Activated CD4-positive, alpha-beta memory T cell treated with anti-CD3 and anti-CD28 coated beads for 36 hours (primary cell): ENCODE measurements at regions of chr17 and their contacts with region 1.

Region 1: DNA sequence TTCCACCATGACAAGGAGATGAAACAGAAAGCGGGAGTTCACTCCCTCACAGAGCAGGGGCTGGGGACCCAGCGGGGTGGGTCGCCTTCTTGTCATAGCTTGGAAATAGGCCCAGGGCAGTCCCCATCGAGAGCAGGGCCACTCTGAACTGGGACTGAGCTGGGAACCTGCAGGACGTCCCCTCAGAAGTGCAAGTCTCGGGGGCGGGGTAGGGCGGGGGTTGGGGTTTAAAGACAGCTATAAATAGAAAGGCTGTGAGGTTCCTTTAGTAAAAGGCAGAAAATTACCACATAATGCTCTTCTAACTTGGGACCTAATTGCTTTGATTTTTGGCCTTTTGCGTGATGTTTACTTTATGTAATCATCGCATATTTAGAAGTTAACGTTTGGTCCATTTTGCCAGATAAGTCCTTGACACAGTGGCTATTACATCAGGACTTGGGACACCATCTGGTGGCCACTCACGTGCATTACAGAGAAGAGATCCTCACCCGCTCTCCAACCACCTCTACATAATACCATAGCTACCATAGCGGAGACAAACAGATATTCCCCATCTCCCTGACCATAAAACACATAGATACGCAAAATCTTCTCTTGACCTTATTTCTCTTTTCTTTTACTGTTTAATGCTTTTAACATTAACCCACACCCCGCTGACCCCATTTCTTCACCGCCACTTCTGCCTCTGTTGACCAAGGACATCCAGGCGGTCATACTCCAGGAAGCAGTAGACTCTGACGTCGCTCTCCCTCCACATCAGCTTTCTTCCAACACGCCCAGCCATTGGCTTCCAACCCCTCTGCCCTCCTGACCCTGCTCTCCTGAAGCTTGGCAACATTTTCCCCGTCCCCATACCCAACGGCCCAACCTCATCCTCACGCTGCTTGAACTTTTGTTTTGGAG is 27.5 kb upstream of the PIK3R6 start:
- DNase-seq: peak; percentile 68
- H3K4me3 Mint-ChIP-seq: no peak overlapping the region
- H3K27ac Mint-ChIP-seq: no peak overlapping the region
- H3K4me1 Mint-ChIP-seq: peaks cover 64% of the 10 kb centered on the region
- H3K27me3 Mint-ChIP-seq: no peaks in the 10 kb centered on the region

Region 2: GRCh38 chr17:8383143-8383822 is 511.6 kb before region 1 on chr17 and contains the start of gene RPL26:
- CTCF ChIA-PET with region 1: interaction called, 3 read pairs
- POLR2A ChIA-PET with region 1: no interaction called
- intact Hi-C with region 1: loop called (anchors 10 kb)
- DNase-seq: peak; percentile 97
- H3K4me3 Mint-ChIP-seq: peak within 1 kb of the TSS; percentile 97
- H3K27ac Mint-ChIP-seq: peak within 1 kb of the TSS; percentile 99
- H3K4me1 Mint-ChIP-seq: peaks cover 51% of the 10 kb centered on the region
- H3K27me3 Mint-ChIP-seq: no peaks in the 10 kb centered on the region
- total RNA-seq, gene RPL26: 2,959 to 2,997 TPM

Region 3: DNA sequence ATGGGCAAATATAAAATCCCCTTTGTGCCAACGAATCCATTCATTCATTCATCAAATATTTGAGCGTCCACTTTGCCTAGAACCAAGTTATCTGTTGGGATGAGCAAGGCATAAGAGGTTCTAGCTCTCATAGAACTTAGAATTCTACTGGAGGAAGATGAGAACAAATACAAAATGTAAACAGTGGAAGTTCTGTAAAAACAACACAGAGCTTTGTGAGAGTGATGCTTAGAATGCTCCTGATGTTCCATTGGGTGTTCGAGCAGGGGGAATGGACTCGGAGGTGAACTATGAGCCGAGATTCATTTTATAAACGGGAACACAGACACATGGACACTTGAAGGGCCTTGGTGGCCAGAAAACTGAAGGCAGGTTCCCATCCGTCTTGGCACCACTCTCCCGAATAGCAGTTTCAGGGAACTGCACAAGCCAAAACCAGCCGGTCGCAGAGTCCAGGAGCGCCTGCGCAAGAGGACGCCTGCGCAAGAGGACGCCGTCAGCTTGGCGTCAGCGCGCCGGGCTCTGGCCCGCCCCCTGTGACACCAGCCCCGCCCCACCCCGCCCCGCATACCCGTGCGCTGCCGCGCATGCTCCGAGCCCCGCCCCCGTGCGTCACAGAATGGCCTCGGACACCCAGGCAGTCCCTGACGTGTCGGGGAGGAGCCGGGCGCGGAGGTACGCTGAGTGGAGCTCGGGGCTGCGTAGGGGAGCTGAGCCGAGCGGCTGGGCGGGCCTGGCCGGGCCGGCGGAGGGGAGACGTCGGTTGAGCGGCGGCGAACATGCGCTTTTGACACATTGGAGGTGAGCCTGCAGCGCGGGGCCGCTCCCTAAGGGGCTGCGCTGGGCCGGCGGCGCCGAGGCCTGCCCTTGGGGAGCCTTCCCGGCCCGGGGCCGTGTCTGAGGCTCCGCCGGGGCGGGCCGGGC is 459.4 kb before region 1 on chr17 and contains the start of gene NDEL1:
- CTCF ChIA-PET with region 1: no interaction called
- POLR2A ChIA-PET with region 1: no interaction called
- intact Hi-C with region 1: loop called (anchors 5 kb)
- DNase-seq: peak; percentile 99
- H3K4me3 Mint-ChIP-seq: peak within 1 kb of the TSS; percentile 92
- H3K27ac Mint-ChIP-seq: peak within 1 kb of the TSS; percentile 91
- H3K4me1 Mint-ChIP-seq: peaks cover 31% of the 10 kb centered on the region
- H3K27me3 Mint-ChIP-seq: no peaks in the 10 kb centered on the region
- total RNA-seq, gene NDEL1: 58.0 to 62.8 TPM

Region 4: DNA sequence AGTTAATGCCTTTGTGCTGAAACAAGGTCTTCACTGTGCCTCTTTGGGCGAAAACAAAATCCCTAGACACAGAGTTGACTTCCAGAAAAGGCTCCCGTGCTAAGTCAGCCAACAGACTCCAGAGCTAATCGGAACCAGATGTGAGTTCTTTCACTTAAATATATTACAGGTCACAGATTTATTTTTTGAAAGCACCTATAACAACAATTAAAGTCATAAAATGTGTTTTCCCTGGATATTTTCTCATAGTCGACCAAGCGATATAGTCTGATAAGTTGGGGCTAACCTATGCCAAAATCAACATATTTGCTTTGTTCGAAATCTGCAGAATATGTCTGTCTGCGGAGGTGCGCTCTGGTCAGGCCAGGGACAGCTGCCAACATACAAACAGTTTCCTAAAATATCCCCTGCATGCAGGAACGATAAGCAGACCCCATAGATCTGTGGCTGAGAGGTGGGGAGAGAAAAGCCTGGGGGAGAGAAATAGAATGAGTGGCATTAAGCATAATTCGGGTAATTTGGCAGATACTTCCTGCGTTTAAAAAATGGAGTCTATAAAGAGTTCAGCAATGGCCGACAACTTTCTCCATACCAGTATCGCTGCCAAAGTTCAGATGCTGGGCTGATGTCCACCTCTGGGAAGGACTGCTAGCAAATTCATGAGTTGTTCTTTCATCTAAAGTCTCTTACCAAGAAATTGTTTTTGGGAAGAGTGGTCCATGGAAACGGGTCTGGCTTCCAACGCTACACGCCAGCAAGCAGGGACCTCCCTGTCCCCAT is 213.6 kb before region 1 on chr17:
- CTCF ChIA-PET with region 1: no interaction called
- POLR2A ChIA-PET with region 1: no interaction called
- intact Hi-C with region 1: no loop called
- DNase-seq: no peak
- H3K4me3 Mint-ChIP-seq: no peak overlapping the region
- H3K27ac Mint-ChIP-seq: no peak overlapping the region
- H3K4me1 Mint-ChIP-seq: no peaks in the 10 kb centered on the region
- H3K27me3 Mint-ChIP-seq: peaks cover 16% of the 10 kb centered on the region

Region 5: GRCh38 chr17:8753976-8754440 is 140.9 kb before region 1 on chr17:
- CTCF ChIA-PET with region 1: interaction called, 6 read pairs
- POLR2A ChIA-PET with region 1: no interaction called
- intact Hi-C with region 1: loop called (anchors 1 kb)
- DNase-seq: no peak
- H3K4me3 Mint-ChIP-seq: no peak overlapping the region
- H3K27ac Mint-ChIP-seq: no peak overlapping the region
- H3K4me1 Mint-ChIP-seq: no peaks in the 10 kb centered on the region
- H3K27me3 Mint-ChIP-seq: peaks cover 8% of the 10 kb centered on the region

Region 6: GRCh38 chr17:8785547-8786413 is 109.1 kb before region 1 on chr17:
- CTCF ChIA-PET with region 1: interaction called, 28 read pairs
- POLR2A ChIA-PET with region 1: no interaction called
- intact Hi-C with region 1: no loop called
- DNase-seq: peak; percentile 77
- H3K4me3 Mint-ChIP-seq: no peak overlapping the region
- H3K27ac Mint-ChIP-seq: no peak overlapping the region
- H3K4me1 Mint-ChIP-seq: peaks cover 2% of the 10 kb centered on the region
- H3K27me3 Mint-ChIP-seq: peaks cover under 1% of the 10 kb centered on the region

Region 7: DNA sequence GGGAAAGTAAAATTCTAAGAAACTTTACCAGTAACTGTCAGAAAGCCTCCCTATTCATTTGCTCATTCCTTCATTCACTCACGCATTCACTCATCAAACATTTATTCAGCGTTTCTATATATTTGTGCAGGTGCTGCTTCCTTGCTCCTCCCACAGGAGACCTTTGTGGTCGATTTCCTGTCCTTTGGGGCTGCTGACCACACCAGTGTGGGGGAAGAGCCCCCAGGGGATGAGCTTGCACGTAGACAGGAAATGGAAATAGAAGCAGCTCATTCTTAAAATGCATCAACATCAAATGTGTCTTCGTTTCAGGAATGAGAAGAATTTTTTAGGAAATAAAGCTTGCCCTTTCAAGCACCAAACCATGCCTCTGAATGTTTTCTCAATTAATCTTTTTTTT is 37.0 kb before region 1 on chr17:
- CTCF ChIA-PET with region 1: no interaction called
- POLR2A ChIA-PET with region 1: no interaction called
- intact Hi-C with region 1: loop called (anchors 5 kb)
- DNase-seq: peak; percentile 82
- H3K4me3 Mint-ChIP-seq: no peak overlapping the region
- H3K27ac Mint-ChIP-seq: no peak overlapping the region
- H3K4me1 Mint-ChIP-seq: peaks cover 46% of the 10 kb centered on the region
- H3K27me3 Mint-ChIP-seq: no peaks in the 10 kb centered on the region

Region 8: DNA sequence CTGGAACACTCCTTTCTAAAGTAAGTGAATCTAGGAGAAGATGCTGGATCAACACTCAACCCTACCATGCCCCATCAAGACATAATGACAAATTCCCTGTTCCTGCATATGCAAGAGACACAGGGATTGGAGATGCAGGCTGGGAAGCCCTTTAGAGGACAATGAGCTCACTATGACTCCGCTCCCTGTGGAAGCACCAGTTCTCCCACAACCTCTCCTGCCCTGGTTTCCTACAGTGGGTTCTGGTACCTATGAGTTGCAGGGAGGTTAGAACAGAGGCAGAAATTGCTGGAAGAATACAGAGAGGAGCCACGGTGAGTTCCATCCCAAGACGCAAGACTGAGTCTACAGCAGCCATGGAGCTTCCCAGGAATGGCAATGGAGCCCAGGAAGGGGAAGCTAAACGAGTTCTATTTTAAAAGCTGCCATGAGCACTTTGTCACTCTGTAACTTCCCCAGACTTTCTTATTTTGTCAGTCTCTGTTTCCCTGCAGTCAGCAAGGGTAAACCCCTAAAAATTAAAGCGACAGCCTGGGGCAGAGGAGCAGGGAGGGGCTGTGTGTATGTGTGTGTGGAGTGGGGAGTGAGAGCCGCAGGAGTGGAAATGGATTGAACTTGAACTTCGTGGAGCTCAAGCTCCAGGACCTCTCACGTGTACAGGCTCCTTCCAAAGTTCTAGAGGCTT is 14.8 kb after region 1 on chr17:
- CTCF ChIA-PET with region 1: interaction called, 17 read pairs
- POLR2A ChIA-PET with region 1: no interaction called
- intact Hi-C with region 1: no loop called
- DNase-seq: no peak
- H3K4me3 Mint-ChIP-seq: no peak overlapping the region
- H3K27ac Mint-ChIP-seq: no peak overlapping the region
- H3K4me1 Mint-ChIP-seq: peaks cover 6% of the 10 kb centered on the region
- H3K27me3 Mint-ChIP-seq: no peaks in the 10 kb centered on the region